Dendritic cell treated with granulocyte-macrophage colony-stimulating factor and Interleukin-4, amounts not matched to agents 40 ng/mL and 50 ng/mL, for 4 days (primary cell): ENCODE measurements at regions of chr11 and their contacts with region 1.

Region 1: GRCh38 chr11:59171508-59172322 is at the start of gene DTX4:
- H3K4me3 Mint-ChIP-seq: peak within 1 kb of the TSS; percentile 72
- H3K27ac Mint-ChIP-seq: peak within 1 kb of the TSS; percentile 28
- H3K4me1 Mint-ChIP-seq: peaks cover 17% of the 10 kb centered on the region
- H3K27me3 Mint-ChIP-seq: peaks cover 24% of the 10 kb centered on the region

Region 2: GRCh38 chr11:59207988-59208451 is 36.3 kb after region 1 on chr11:
- intact Hi-C with region 1: loop called (anchors 2 kb)
- H3K4me3 Mint-ChIP-seq: peak overlapping the region; percentile 97
- H3K27ac Mint-ChIP-seq: peak overlapping the region; percentile 95
- H3K4me1 Mint-ChIP-seq: peaks cover 76% of the 10 kb centered on the region
- H3K27me3 Mint-ChIP-seq: no peaks in the 10 kb centered on the region

Region 3: GRCh38 chr11:59429924-59430516 is 258.3 kb after region 1 on chr11:
- intact Hi-C with region 1: loop called (anchors 1 kb)
- H3K4me3 Mint-ChIP-seq: no peak overlapping the region
- H3K27ac Mint-ChIP-seq: no peak overlapping the region
- H3K4me1 Mint-ChIP-seq: no peaks in the 10 kb centered on the region
- H3K27me3 Mint-ChIP-seq: no peaks in the 10 kb centered on the region